ENCODE measurements at regions of chr1 and their contacts with region 1.

Region 1: DNA sequence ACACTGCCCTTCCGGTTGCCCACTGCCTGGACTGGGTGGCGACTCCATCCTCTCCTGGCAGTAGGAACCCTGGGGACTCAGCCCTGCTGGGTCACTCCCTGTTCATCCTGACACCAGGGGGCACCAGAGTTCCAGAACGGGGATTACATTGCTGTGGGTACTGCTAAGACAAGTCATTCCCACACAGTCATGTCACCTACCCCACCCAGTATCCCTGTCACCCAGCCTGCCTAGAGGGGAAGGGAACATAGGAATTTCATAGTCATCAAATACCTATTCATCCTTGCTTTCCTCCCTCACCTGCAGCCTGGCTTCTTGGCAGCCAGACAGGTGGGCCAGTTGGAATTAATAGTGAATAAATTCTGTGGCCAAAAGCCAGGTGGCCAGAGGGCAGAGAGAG is 9.8 kb upstream of the SFN start:
- DNase-seq: peak; percentile 94 to 95
- H3K4me3 ChIP-seq: no peak overlapping the region
- H3K27ac ChIP-seq: peak overlapping the region; percentile 88
- H3K4me1 ChIP-seq: peaks cover 63% of the 10 kb centered on the region
- H3K27me3 ChIP-seq: no peaks in the 10 kb centered on the region
- CTCF ChIP-seq: peak; percentile 79

Region 2: DNA sequence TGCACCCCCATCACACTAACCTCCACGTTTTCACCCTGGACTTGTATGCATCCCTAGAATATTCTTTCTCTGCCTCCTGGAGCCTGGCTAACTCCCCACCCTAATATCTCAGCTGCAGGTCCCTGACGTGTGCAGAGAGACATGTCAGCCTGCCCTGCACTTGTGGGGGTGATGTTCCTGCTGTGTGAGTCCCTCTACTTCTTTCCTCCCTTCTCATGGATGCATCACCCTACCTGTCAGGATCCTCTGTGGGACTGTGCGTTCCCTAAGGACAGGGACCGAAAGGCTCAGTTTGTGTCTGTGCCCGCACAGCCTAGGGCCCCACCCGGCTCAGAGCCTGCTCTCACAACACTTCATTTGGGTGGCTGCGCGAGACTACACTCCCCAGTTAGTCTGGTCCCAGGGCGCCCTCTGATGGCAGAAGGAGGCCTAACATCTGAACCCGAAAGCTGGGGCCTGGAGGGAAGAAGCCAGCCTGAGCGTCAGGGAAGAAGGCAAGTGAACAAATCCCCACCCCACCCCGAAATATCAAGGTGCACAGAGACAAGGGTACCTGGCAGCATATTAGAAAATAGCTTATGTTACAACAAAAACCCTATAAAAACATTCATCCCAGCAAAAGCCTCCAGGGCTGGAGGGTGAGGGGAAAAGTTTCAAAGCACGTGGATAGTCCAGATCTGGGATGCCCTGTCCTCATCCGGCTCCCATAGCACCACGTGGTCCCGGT is 531.7 kb before region 1 on chr1:
- CTCF ChIA-PET with region 1: no interaction called
- POLR2A ChIA-PET with region 1: no interaction called
- intact Hi-C with region 1: no loop called
- DNase-seq: peak; percentile 42 to 86
- H3K4me3 ChIP-seq: no peak overlapping the region
- H3K27ac ChIP-seq: no peak overlapping the region
- H3K4me1 ChIP-seq: no peaks in the 10 kb centered on the region
- H3K27me3 ChIP-seq: no peaks in the 10 kb centered on the region
- CTCF ChIP-seq: peak; percentile 80

Region 3: GRCh38 chr1:26602378-26602959 is 250.7 kb before region 1 on chr1:
- CTCF ChIA-PET with region 1: no interaction called
- POLR2A ChIA-PET with region 1: no interaction called
- intact Hi-C with region 1: loop called (anchors 1 kb)
- DNase-seq: peak; percentile 41 to 54
- H3K4me3 ChIP-seq: no peak overlapping the region
- H3K27ac ChIP-seq: no peak overlapping the region
- H3K4me1 ChIP-seq: no peaks in the 10 kb centered on the region
- H3K27me3 ChIP-seq: no peaks in the 10 kb centered on the region
- CTCF ChIP-seq: peak; percentile 80

Region 4: DNA sequence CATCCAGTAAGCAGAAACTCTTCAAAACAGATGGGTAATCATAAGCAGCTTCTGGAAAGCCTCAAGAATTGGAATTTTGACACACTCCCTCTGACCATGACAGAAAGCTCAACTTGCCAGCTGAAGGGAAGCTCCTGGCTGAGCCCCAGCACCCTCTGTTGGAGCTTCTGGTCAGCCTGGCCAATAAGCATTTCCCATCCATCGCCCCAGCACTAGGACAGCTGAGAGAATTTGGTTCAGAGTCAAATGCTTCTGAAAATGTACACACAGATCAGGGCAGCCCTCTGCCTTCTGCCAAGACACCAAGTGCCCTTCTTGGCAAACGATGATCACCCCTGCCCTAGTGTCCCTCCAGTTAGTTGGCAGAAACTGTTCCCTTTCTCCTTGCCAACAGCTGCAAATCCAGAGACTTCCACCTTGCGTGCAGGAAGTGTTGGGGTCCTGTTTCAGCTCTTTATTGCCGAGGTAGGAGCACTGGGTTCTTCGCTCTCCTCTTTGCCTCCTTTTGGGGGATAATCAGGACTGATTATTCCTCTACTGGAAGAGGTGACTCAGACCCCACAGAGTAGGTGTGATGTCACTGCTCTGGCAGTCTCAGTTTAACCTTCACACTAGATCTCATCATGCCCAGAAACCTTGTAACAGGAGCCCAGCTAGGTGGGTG is 53.5 kb before region 1 on chr1:
- CTCF ChIA-PET with region 1: interaction called, 8 read pairs
- POLR2A ChIA-PET with region 1: interaction called, 9 read pairs
- intact Hi-C with region 1: loop called (anchors 2 kb)
- DNase-seq: peak; percentile 59 to 88
- H3K4me3 ChIP-seq: peak overlapping the region; percentile 37; the same call in 1 of the 2 replicates
- H3K27ac ChIP-seq: peak overlapping the region; percentile 97
- H3K4me1 ChIP-seq: peaks cover 33% of the 10 kb centered on the region
- H3K27me3 ChIP-seq: no peaks in the 10 kb centered on the region
- CTCF ChIP-seq: no peak

Region 5: GRCh38 chr1:26826261-26827105 is 26.7 kb before region 1 on chr1 and contains the start of gene ZDHHC18:
- CTCF ChIA-PET with region 1: no interaction called
- POLR2A ChIA-PET with region 1: interaction called, 4 read pairs
- intact Hi-C with region 1: loop called (anchors 1 kb)
- DNase-seq: peak in 1 of 2 experiments; percentile 70
- H3K4me3 ChIP-seq: peak within 1 kb of the TSS; percentile 62; the same call in 1 of the 2 replicates
- H3K27ac ChIP-seq: peak within 1 kb of the TSS; percentile 94
- H3K4me1 ChIP-seq: peaks cover 34% of the 10 kb centered on the region
- H3K27me3 ChIP-seq: no peaks in the 10 kb centered on the region
- CTCF ChIP-seq: no peak; the same call in 1 of the 2 replicates
- total RNA-seq, gene ZDHHC18: 27.2 and 36.1 TPM in 2 replicates

Region 6: DNA sequence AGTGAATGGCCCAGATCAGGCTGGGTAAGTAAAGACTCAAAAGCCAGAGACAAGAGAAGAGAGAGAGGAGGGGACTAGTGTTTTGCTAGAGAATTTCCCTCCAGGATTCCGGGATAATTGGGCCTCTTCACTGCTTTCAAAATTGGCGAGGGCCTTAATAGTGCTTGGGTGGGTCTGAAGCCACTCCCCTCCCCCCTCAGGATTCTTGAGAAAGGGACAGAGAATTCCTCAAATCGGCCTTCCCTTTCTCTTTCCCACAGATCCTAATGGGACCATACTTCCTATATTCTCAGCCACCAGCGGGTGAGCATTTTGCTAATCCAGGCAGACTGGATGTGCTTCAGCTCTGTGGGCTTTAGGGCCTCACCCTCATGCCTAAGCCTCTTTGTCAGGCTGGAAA is 21.7 kb after region 1 on chr1:
- CTCF ChIA-PET with region 1: no interaction called
- POLR2A ChIA-PET with region 1: no interaction called
- intact Hi-C with region 1: loop called (anchors 1 kb)
- DNase-seq: no peak
- H3K4me3 ChIP-seq: no peak overlapping the region
- H3K27ac ChIP-seq: peak overlapping the region; percentile 28
- H3K4me1 ChIP-seq: peaks cover 43% of the 10 kb centered on the region
- H3K27me3 ChIP-seq: no peaks in the 10 kb centered on the region
- CTCF ChIP-seq: no peak